ENCODE measurements at regions of chr2 and their contacts with region 1.

Region 1: DNA sequence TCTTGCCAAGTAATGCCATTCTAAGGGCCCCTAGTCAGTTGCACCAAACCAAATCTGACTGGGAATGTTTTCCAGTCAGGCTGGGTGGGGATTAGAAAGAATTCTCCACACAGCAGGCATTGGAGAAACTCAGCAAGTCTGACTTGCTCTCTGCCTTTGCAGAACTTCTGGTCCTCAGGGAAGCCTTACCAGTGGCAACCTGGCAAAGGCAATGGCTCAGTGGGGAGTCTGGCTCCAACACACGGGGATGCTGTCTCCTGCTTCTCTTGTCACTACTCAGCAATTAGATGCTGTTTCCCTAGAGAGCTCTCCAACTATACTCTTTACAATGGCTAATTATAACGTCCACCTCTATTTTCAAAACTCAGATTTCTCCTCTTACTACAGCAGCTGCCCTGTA is 810.7 kb downstream of the LRRTM4 start:
- DNase-seq: no peak
- ATAC-seq: no peak
- H3K4me3 ChIP-seq: no peak overlapping the region
- H3K27ac ChIP-seq: no peak overlapping the region
- H3K4me1 ChIP-seq: no peaks in the 10 kb centered on the region
- H3K27me3 ChIP-seq: no peaks in the 10 kb centered on the region
- CTCF ChIP-seq: no peak
- POLR2A ChIP-seq: no peak

Region 2: DNA sequence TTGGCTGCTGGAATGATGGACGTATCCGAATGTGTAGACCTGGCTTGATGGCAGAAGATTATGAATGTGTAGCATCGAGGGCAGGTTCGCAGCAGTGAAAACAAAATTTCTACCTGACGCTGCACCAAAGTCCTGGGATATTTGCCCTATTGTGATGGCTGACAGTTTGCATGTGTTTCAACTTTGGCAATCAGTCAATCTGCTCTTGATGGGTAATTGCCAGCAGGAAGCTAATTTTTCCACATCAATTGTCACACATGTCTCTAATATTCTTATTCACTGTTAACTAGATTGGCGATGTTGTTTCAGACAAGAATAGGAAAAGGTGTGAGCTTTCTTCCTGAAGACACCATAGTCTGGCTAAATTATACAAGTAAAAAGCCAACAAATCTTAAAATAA is 10.6 kb before region 1 on chr2:
- intact Hi-C with region 1: loop called in 1 of 10 experiments (anchors 1 kb)
- DNase-seq: no peak
- ATAC-seq: no peak
- H3K4me3 ChIP-seq: no peak overlapping the region
- H3K27ac ChIP-seq: no peak overlapping the region
- H3K4me1 ChIP-seq: no peaks in the 10 kb centered on the region
- H3K27me3 ChIP-seq: no peaks in the 10 kb centered on the region
- CTCF ChIP-seq: no peak
- POLR2A ChIP-seq: no peak

Region 3: GRCh38 chr2:76793647-76794334 is 82.3 kb after region 1 on chr2:
- intact Hi-C with region 1: no loop called
- DNase-seq: no peak
- ATAC-seq: no peak
- H3K4me3 ChIP-seq: no peak overlapping the region
- H3K27ac ChIP-seq: no peak overlapping the region
- H3K4me1 ChIP-seq: no peaks in the 10 kb centered on the region
- H3K27me3 ChIP-seq: no peaks in the 10 kb centered on the region
- CTCF ChIP-seq: no peak
- POLR2A ChIP-seq: no peak